Activated CD8-positive, alpha-beta memory T cell treated with anti-CD3 and anti-CD28 coated beads, Interleukin-2, amount 10 ng/mL, durations not matched to agents 7 days and 5 days (primary cell): ENCODE measurements at regions of chr19 and their contacts with region 1.

Region 1: DNA sequence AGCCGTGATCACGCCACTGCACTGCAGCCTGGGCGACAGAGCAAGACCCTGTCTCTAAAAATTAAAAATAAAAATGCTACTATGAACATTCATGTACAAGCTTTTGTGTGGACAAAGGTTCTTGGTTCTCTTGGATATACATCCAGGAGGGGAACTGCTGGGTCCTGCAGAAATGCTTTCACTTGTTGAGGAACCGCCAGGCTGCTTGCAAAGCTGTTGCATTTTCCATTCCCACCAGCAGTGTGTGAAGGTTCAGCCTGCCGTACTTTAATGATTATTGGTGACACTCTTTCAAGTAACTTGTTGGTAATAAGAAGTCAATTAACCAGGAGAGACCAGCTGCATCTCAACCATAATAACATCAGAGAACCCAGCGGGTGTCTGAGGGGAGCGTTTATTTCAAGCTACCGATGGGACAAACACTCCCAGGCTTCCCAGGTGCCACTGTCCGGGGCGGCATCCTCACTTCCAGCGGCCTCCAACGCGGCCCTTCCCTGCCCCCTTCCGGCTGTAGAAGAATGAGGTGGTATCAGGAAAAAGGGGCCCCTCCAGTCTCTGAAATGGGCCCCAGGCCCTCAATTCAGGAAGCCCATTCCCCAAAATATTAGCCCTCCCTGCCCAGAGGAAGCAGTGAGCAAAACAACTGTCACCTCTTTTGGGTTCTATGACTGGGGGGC is 15.2 kb upstream of the PPP1R12C start:
- DNase-seq: no peak
- ATAC-seq: peak; percentile 30
- H3K4me3 Mint-ChIP-seq: no peak overlapping the region
- H3K27ac Mint-ChIP-seq: no peak overlapping the region
- H3K4me1 Mint-ChIP-seq: no peaks in the 10 kb centered on the region
- H3K27me3 Mint-ChIP-seq: peaks cover 37% of the 10 kb centered on the region

Region 2: GRCh38 chr19:54882758-54883157 is 249.8 kb before region 1 on chr19:
- CTCF ChIA-PET with region 1: interaction called, 13 read pairs
- DNase-seq: no peak
- ATAC-seq: peak; percentile 82
- H3K4me3 Mint-ChIP-seq: peak overlapping the region; percentile 54
- H3K27ac Mint-ChIP-seq: peak overlapping the region; percentile 88
- H3K4me1 Mint-ChIP-seq: peaks cover 12% of the 10 kb centered on the region
- H3K27me3 Mint-ChIP-seq: peaks cover 14% of the 10 kb centered on the region

Region 3: DNA sequence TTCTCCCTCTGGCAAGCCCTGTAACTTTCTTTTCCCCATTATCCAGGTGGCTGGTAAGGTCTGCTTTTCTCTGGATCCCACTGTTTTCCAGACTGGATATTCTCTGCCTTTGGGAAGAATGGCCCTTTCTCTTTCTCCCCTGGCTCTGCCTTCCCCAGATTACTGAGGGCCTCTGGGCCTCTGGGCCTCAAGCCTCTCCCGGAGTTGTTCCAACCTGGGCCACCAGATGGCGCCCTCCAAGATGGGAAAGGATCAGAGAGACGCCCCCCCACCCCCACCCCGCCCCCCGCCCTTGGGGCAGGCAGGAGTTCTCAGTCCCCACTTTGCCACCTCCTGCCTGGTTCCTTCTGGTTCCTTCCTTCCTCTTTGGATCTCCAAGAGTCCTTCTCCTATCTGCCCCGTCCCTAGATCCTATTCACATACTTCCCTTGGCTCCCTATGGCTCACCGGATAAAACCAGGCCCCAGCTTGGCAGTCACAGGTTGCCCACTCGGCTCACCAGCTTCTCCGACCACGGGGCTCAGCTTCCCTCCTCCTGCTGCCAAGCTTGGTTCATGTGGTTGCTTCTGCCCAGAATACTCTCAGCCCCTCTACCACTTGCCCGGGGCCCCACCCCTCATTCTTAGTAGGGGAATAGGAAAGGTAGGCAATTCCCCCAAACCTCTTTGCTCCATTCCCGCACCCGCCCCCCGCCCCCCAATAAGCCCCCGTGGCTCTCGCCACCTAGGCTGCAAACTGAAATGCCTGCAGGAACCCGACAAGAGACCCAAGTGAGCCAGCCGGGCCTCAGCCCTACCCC is 43.8 kb before region 1 on chr19:
- CTCF ChIA-PET with region 1: interaction called, 12 read pairs
- DNase-seq: peak; percentile 84
- ATAC-seq: no peak
- H3K4me3 Mint-ChIP-seq: no peak overlapping the region
- H3K27ac Mint-ChIP-seq: no peak overlapping the region
- H3K4me1 Mint-ChIP-seq: peaks cover 16% of the 10 kb centered on the region
- H3K27me3 Mint-ChIP-seq: peaks cover 42% of the 10 kb centered on the region

Region 4: GRCh38 chr19:55178781-55179599 is 46.4 kb after region 1 on chr19:
- CTCF ChIA-PET with region 1: no interaction called
- DNase-seq: peak; percentile 96
- ATAC-seq: peak; percentile 88
- H3K4me3 Mint-ChIP-seq: peak overlapping the region; percentile 59
- H3K27ac Mint-ChIP-seq: no peak overlapping the region
- H3K4me1 Mint-ChIP-seq: peaks cover 26% of the 10 kb centered on the region
- H3K27me3 Mint-ChIP-seq: peaks cover 58% of the 10 kb centered on the region